Dendritic cell treated with granulocyte-macrophage colony-stimulating factor and Interleukin-4, amounts not matched to agents 40 ng/mL and 50 ng/mL, for 4 days (primary cell): ENCODE measurements at regions of chr12 and their contacts with region 1.

Region 1: GRCh38 chr12:106357549-106358395 is at the start of gene POLR3B:
- H3K4me3 Mint-ChIP-seq: peak within 1 kb of the TSS; percentile 91
- H3K27ac Mint-ChIP-seq: peak within 1 kb of the TSS; percentile 94
- H3K4me1 Mint-ChIP-seq: peaks cover 16% of the 10 kb centered on the region
- H3K27me3 Mint-ChIP-seq: peaks cover 9% of the 10 kb centered on the region

Region 2: DNA sequence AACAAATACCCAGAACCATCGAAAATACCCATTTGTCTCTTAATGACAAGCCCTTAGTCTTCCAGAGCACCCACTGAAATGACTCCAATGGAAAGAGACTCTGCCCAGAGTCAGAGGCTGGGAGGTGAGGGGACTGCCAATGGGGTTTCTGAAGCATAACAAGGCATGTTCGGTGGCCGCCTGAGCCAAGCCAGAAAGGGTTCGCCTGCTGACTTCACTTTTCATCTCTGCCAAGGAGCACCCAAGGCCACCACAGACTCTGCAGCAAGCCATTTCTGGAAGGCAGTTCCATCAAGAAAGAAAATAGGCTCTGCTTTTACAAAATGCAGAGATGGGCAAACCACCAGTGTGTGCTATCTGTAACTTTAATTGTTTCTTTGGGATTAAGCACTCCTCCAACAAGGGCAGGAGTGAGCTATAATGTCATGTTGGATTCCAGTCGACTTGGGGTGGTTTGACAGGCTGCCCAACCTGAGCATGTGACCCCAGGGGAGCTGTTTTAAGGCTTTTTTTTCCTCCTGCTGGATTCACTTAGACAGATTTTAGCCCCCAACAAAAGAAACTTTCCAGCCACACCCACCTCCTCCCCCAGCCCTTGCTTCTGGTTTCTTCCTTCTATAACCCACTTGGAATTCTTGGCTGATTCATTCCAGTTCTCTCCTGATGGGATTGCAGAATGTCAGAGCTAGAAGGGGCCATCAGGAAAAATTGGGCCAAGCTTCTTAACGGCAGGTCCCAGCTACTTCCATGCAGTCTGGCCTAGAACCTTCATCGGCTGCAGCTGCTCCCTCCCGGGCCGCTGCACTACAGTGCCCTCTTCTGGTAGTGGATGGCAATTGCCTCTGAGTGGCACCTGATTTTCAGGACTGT is 134.1 kb before region 1 on chr12:
- intact Hi-C with region 1: loop called (anchors 5 kb)
- H3K4me3 Mint-ChIP-seq: no peak overlapping the region
- H3K27ac Mint-ChIP-seq: no peak overlapping the region
- H3K4me1 Mint-ChIP-seq: peaks cover 23% of the 10 kb centered on the region
- H3K27me3 Mint-ChIP-seq: peaks cover 20% of the 10 kb centered on the region

Region 3: DNA sequence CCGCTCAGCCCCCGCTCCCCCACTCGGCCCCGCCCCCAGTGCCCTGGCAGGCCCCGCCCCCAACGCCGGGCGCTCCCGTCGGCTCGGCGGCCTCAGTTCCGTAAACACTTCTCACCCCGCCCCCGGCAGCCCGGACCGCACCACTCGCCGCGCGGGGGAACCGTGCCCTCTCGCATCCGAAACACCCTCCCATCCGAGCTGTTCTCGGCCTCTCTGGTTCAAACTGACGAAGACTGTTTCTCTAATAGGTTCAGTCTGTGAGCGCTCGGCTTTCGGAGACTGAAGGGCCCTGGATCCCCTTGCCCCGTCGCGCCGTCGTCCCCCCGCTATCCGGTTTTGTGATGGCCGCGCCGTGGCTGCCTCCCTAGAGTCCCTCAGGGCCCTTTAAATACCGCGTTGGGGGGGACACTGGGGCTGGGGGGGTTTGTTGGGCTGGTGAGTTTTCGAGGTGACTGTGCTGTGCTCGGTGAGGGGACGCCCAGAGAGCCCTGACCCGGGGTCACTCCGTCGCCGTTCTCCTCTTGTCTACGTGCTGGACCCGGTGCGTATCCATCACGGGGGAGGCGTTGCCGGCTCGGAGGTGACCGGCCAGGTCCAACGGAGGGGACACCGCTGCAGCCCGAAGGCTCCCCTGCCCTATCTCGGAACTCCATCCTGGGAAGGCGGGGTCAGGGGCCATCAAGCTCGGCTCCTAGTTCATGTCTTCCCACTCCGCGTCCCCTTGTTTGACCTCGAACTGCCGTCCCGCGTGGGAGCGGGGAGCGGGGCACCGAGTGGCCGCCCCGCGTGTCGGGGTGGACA is 55.2 kb before region 1 on chr12 and contains the start of gene TCP11L2:
- intact Hi-C with region 1: loop called (anchors 2 kb)
- H3K4me3 Mint-ChIP-seq: peak within 1 kb of the TSS; percentile 95
- H3K27ac Mint-ChIP-seq: peak within 1 kb of the TSS; percentile 99
- H3K4me1 Mint-ChIP-seq: peaks cover 42% of the 10 kb centered on the region
- H3K27me3 Mint-ChIP-seq: no peaks in the 10 kb centered on the region

Region 4: DNA sequence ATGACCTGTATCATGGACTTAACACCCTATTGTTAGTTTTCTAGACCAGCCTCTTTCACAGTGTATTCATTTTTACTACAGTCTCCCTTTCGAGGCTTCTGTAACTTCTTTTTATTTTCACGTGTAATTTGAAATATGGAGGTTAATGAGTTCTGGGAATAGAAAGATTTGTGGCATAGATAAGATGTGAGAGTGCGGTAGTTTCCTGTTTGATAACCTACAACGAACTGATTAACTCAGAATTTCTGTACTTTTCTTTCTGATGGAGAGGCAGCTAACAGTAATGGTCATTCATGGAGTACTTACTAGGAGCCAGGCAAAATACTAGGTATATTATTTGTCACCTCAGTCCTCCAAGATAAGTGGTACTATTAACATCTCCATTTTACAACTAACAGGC is 21.0 kb after region 1 on chr12:
- intact Hi-C with region 1: no loop called
- H3K4me3 Mint-ChIP-seq: no peak overlapping the region
- H3K27ac Mint-ChIP-seq: no peak overlapping the region
- H3K4me1 Mint-ChIP-seq: no peaks in the 10 kb centered on the region
- H3K27me3 Mint-ChIP-seq: no peaks in the 10 kb centered on the region

Region 5: GRCh38 chr12:106774005-106774807 is 416.4 kb after region 1 on chr12 and contains the start of gene RIC8B:
- intact Hi-C with region 1: loop called (anchors 5 kb)
- H3K4me3 Mint-ChIP-seq: peak within 1 kb of the TSS; percentile 93
- H3K27ac Mint-ChIP-seq: peak within 1 kb of the TSS; percentile 94
- H3K4me1 Mint-ChIP-seq: peaks cover 18% of the 10 kb centered on the region
- H3K27me3 Mint-ChIP-seq: peaks cover 9% of the 10 kb centered on the region

Region 6: DNA sequence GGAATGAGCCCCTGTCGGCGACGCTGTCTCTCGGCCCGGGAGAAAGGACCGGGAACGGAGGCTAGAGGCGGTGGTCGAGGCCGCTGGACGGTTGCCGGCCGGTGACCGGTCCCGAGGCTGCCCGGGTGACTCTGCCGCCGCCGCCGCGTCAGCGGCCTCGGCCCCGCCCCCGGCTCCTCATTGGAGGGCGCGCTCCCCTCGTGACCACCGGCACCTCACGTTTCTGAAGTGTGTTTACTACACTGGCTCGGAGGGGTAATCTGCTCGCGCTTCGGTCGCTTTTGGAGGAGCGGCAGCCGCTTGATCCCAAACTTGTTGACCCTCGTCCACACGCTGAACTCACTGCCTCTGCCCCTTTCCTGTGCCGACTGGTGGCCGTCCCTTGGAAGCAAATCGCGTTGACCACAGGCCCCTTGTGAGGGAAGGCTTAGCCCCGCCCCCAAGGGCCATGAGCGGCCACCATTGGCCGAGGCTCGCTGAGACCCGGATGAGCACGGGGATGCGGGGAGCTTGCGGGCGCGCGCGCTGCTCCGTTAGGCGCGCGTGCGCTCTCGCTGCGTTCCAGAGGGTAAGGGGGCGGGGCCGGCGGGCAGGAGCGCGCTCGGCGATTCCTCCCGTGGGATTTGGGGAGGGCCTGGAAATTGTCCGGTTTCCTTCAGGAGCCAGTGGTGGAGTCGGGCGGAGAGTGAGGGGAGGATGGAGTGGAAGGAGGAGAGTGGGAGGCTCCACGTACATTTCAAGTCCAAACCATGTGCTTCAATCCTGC is 735.8 kb after region 1 on chr12 and contains the start of gene CRY1:
- intact Hi-C with region 1: loop called (anchors 5 kb)
- H3K4me3 Mint-ChIP-seq: no peak within 1 kb of the TSS
- H3K27ac Mint-ChIP-seq: no peak within 1 kb of the TSS
- H3K4me1 Mint-ChIP-seq: peaks cover 7% of the 10 kb centered on the region
- H3K27me3 Mint-ChIP-seq: peaks cover 6% of the 10 kb centered on the region